HCT116 (cell line): ENCODE measurements at regions of chr1 and their contacts with region 1.

Region 1: GRCh38 chr1:48109390-48110013 is 112.3 kb upstream of the TRABD2B start:
- DNase-seq: peak; percentile 24
- ATAC-seq: peak; percentile 89
- H3K4me3 ChIP-seq: no peak overlapping the region
- H3K27ac ChIP-seq: no peak overlapping the region
- H3K4me1 ChIP-seq: no peaks in the 10 kb centered on the region
- H3K27me3 ChIP-seq: peaks cover 26% of the 10 kb centered on the region
- CTCF ChIP-seq: peak; percentile 72 to 86 (median 85)
- POLR2A ChIP-seq: no peak
- RAD21 ChIP-seq: peak; percentile 81

Region 2: GRCh38 chr1:48530727-48531351 is 421.3 kb after region 1 on chr1:
- CTCF ChIA-PET with region 1: interaction called, 14 read pairs
- POLR2A ChIA-PET with region 1: no interaction called
- RAD21 ChIA-PET with region 1: no interaction called
- intact Hi-C with region 1: loop called (anchors 1 kb)
- DNase-seq: peak; percentile 55
- ATAC-seq: peak; percentile 100
- H3K4me3 ChIP-seq: no peak overlapping the region
- H3K27ac ChIP-seq: no peak overlapping the region
- H3K4me1 ChIP-seq: no peaks in the 10 kb centered on the region
- H3K27me3 ChIP-seq: peaks cover 44% of the 10 kb centered on the region
- CTCF ChIP-seq: peak; percentile 61 to 94 (median 94); a peak in 5 of 6 replicates
- POLR2A ChIP-seq: no peak
- RAD21 ChIP-seq: peak; percentile 63